Activated CD4-positive, alpha-beta T cell treated with anti-CD3 and anti-CD28 coated beads for 36 hours (primary cell): ENCODE measurements at regions of chr1 and their contacts with region 1.

Region 1: DNA sequence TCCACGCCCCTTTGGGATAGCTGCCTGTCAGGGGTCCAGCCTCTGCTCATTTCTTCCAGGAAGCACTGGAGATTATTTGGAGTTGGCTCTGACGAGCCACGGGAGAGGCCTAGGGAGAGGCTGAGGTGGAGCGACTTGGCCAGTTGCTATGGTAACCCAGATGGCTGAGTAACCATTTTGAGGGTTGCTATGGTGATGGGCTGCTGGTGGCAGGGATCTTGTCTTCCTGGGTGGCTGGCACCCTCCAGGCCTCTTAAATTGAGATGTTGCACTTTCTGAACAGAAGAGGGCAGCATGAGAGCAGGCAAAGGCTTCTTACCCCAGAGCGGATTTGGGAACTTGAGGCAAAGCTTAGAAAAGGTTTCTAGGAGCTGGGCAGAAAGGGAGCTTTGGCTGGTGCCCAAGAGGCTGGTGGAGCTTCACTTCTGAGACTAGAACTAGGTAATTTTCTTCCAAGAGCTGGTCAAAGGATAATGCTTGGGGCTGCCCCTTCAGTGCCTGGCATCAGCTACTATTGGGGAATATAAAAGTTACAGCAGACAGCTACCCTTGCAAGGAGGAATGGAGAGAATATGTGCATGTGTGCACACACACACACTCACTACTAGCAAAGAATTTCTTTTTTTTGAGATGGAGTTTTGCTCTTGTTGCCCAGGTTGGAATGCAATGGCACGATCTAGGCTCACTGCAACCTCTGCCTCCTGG is 72.5 kb downstream of the NDUFS5 start:
- DNase-seq: peak; percentile 77
- ATAC-seq: peak; percentile 88
- H3K4me3 Mint-ChIP-seq: no peak overlapping the region
- H3K27ac Mint-ChIP-seq: no peak overlapping the region
- H3K4me1 Mint-ChIP-seq: peaks cover 22% of the 10 kb centered on the region
- H3K27me3 Mint-ChIP-seq: peaks cover 2% of the 10 kb centered on the region

Region 2: DNA sequence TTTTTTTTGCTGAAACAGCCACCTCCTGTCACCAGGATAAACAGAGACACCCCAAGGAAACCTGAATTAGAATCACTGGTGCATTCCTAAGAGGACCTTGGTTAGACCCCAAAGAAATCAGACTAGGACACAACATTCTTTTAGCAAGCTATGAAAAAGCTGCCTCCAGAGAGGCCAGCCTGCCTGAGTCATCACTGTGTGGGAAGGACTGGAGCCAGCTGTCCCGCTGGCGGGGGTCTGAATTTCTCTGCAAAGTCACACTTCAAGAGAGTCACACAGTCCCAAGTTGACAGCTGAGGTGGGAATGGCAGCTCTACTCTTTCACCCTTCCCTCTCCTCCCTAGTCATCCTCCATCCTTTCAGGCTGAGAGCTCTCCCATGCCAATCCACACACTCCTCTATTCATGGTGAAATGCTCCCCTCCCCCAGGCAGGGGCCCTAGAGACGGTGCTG is 647.1 kb before region 1 on chr1:
- CTCF ChIA-PET with region 1: no interaction called
- POLR2A ChIA-PET with region 1: no interaction called
- intact Hi-C with region 1: no loop called
- DNase-seq: no peak
- ATAC-seq: no peak
- H3K4me3 Mint-ChIP-seq: no peak overlapping the region
- H3K27ac Mint-ChIP-seq: no peak overlapping the region
- H3K4me1 Mint-ChIP-seq: no peaks in the 10 kb centered on the region
- H3K27me3 Mint-ChIP-seq: peaks cover 4% of the 10 kb centered on the region

Region 3: DNA sequence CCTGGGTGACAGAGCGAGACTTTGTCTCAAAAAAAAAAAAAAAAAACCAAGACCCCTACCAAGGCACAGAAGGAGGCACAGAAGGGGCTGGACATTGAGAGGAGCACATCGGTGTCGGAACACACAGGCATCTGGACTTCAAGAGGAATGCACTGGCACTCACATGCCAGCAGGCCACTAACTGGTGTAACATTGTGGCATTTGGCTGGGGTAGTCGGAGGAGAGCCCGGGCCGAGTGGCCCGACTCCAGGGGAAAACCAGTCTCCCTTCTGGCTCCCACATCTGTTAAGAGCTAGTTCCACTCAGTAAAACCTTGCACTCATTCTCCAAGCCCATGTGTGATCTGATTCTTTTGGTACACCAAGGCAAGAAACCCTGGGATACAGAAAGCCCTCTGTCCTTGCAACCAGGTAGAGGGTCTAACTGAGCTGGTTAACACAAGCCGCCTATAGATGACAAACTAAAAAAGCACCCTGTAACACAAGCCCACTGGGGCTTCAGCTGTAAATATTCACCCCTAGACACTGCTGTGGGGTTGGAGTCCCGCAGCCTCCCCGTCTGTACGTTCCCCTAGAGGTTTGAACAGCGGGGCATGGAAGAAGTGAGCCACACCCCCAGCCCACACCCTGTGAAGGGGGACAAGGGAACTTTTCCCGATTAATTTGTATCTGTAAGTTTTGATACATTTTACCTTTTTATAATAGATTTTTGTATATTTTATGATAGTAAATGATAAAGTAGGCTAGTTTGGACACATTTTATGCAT is 124.9 kb before region 1 on chr1:
- CTCF ChIA-PET with region 1: no interaction called
- POLR2A ChIA-PET with region 1: no interaction called
- intact Hi-C with region 1: no loop called
- DNase-seq: no peak
- ATAC-seq: no peak
- H3K4me3 Mint-ChIP-seq: no peak overlapping the region
- H3K27ac Mint-ChIP-seq: no peak overlapping the region
- H3K4me1 Mint-ChIP-seq: peaks cover 6% of the 10 kb centered on the region
- H3K27me3 Mint-ChIP-seq: no peaks in the 10 kb centered on the region

Region 4: GRCh38 chr1:39061951-39062350 is 36.7 kb before region 1 on chr1:
- CTCF ChIA-PET with region 1: no interaction called
- POLR2A ChIA-PET with region 1: no interaction called
- intact Hi-C with region 1: no loop called
- DNase-seq: no peak
- ATAC-seq: no peak
- H3K4me3 Mint-ChIP-seq: no peak overlapping the region
- H3K27ac Mint-ChIP-seq: no peak overlapping the region
- H3K4me1 Mint-ChIP-seq: no peaks in the 10 kb centered on the region
- H3K27me3 Mint-ChIP-seq: no peaks in the 10 kb centered on the region

Region 5: GRCh38 chr1:39183503-39184353 is 85.0 kb after region 1 on chr1:
- CTCF ChIA-PET with region 1: interaction called, 6 read pairs
- POLR2A ChIA-PET with region 1: no interaction called
- intact Hi-C with region 1: loop called in 1 of 2 experiments (anchors 2 kb)
- DNase-seq: peak; percentile 90
- ATAC-seq: peak; percentile 84
- H3K4me3 Mint-ChIP-seq: peak overlapping the region; percentile 30
- H3K27ac Mint-ChIP-seq: peak overlapping the region; percentile 98
- H3K4me1 Mint-ChIP-seq: peaks cover 50% of the 10 kb centered on the region
- H3K27me3 Mint-ChIP-seq: no peaks in the 10 kb centered on the region

Region 6: DNA sequence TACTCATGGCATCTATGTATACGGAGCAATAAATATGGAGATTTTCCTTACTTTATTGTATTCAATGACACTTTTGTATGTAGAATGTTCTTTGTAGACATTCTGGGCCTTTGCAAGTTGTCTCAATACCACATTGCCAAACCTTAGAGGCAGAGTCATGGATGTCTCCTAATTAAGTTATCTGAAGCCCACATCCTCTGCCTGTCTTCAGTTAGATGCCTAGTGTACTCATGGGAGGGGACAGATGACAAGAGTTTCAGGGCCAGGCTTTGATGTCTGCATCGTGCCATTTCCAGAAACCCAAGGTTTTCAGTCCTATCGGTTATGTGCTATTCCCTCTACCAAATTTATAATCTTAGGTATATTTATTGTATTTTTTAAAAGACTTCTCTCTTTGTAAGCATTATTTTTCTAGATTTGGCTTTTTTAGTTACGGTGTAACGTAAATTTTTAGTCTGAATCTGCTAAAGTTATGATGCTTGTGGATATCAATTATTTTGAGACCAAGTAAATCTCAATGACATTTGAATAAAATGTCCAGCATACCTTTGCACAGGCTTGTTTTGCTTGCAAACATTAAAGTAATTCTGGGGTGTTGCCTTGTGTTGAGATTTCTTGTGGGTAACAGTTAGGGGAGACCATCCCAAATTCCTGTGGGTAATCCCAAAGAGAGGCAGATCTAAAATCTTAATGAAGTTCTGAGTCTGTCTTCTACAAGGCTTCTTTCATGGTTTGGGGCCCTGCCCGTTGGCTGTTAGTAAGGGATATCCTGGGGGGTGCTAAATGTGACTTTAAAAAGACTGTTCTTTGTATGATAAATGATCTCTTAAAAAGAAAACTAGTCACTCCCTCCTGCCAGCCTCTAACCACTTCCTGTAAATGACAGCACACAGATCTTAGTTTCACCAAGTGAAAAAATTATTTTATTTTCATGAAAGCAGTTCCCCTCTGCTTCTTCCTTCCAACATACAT is 97.8 kb after region 1 on chr1:
- CTCF ChIA-PET with region 1: interaction called, 31 read pairs
- POLR2A ChIA-PET with region 1: interaction called, 3 read pairs
- intact Hi-C with region 1: loop called (anchors 1 to 2 kb)
- DNase-seq: peak; percentile 78
- ATAC-seq: peak; percentile 42
- H3K4me3 Mint-ChIP-seq: peak overlapping the region; percentile 54
- H3K27ac Mint-ChIP-seq: peak overlapping the region; percentile 87
- H3K4me1 Mint-ChIP-seq: peaks cover 84% of the 10 kb centered on the region
- H3K27me3 Mint-ChIP-seq: no peaks in the 10 kb centered on the region

Region 7: DNA sequence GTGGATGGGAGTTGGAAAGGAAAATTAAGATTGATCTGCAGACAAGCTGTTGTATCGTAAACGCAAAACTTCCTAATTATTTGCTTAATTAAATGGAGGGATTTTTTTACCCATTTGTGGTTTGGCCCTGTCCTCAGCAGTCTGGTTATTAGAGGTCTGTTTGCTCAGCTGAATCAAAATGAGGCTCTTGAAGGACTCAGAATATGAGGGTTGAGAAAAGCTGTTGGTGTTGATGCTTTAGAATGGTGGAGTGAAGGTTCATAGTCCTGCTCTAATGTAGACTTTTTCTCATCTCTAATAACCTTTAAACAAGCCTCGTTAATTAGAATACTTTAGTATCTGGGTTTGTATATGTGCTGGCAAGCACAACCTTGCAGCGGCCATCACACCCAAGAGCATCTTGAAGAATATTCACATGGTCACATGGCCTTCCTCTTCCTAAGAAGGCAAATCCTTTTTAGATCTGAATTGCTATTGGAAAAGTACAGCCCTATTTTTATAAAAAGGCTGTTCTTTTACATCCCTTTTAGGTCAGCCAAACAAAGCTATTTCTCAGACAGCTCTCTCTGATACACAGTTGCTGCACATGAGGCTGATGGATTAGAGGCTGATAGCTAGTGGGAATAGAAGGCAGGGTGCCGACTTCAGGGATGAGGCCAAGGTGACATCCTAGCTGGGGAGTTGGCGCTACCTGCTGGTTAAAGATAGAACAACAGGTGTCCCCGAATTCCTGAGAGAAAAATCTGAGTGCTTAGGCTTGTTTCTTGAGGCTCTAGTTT is 159.6 kb after region 1 on chr1:
- CTCF ChIA-PET with region 1: interaction called, 37 read pairs
- POLR2A ChIA-PET with region 1: no interaction called
- intact Hi-C with region 1: loop called (anchors 1 to 2 kb)
- DNase-seq: peak; percentile 75
- ATAC-seq: peak; percentile 74
- H3K4me3 Mint-ChIP-seq: no peak overlapping the region
- H3K27ac Mint-ChIP-seq: peak overlapping the region; percentile 51
- H3K4me1 Mint-ChIP-seq: peaks cover 37% of the 10 kb centered on the region
- H3K27me3 Mint-ChIP-seq: no peaks in the 10 kb centered on the region

Region 8: DNA sequence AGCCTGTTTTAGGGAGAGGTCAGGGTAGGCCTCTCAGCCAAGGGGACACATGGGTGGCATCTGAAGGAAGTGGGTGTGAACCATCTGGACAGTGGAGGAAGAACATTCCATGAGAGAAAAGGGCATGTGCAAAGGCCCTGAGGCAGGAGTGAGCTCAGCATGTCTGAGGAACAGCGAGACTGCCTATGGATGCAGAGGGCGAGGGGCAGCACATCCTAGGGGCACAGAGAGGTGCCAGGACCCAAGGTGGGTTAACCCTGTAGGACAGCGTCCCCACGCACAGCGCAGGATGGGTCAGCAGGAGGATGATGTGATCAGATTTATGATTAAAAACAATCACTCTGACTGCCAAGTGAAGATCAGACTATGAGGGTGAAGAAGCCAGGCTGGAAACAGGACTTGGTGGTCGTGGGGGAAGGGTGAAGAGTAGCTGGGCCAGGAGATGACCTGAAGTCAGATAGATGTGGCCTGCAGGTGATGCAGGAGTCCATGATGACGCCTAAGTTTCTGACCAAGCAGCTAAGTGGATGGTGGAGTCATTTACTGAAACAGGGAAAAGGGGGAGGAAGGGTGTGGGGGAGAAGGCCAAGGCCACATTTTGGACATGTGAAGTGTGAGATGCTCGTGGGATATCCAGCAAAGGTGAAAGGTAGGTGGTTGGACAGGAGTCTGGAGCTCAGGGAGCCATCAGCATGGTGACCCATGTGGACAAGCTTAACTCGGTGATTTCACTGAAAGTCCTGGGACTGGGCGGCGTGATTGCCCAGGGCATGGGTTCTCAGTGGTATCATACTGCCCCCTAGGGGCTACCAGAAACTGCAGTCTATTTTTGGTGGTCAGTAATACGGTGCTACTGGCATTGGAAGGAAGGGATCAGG is 440.1 kb after region 1 on chr1:
- CTCF ChIA-PET with region 1: interaction called, 15 read pairs
- POLR2A ChIA-PET with region 1: no interaction called
- intact Hi-C with region 1: loop called in 1 of 2 experiments (anchors 1 kb)
- DNase-seq: peak; percentile 67
- ATAC-seq: peak; percentile 91
- H3K4me3 Mint-ChIP-seq: no peak overlapping the region
- H3K27ac Mint-ChIP-seq: no peak overlapping the region
- H3K4me1 Mint-ChIP-seq: no peaks in the 10 kb centered on the region
- H3K27me3 Mint-ChIP-seq: no peaks in the 10 kb centered on the region

Region 9: DNA sequence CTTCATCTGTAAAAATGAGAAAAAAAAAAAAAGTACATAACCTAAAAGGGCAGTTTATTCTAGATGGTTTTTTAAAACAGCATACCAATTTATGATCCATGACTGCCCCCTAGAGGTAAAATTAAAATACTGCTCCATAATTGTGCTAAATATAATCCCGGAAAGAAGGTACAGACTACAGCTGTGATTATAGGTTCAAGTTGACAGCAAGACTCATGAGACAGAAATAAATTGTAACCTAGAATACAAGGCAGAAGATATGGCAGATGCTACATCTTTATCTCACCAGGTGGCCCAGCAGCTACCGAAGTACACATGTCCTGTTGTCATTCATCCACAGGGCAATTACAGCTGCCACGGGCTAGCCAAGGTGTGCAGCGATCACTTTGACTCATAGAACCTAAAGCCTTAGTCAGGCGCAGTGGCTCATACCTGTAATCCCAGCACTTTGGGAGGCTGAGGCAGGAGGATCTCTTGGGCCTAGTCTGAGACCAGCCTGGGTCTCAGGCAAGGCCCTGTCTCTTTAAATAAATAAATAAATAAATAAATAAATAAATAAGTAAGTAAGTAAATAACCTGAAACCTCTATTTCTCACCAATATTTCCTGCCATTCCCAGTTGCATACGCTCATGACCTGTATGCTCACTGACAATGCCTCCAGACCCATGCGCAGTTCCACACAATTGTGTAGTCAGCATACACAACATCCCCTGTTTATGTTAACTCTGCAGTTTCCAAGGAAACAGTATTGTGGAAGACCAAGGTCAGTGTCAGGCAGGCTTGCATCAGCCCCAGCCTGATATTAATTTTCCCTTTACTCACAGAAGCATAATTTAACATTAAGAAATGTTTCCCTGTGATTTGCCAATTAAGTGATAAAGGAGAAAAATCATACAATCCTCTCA is 621.6 kb after region 1 on chr1:
- CTCF ChIA-PET with region 1: no interaction called
- POLR2A ChIA-PET with region 1: no interaction called
- intact Hi-C with region 1: loop called in 1 of 2 experiments (anchors 10 kb)
- DNase-seq: no peak
- ATAC-seq: peak; percentile 73
- H3K4me3 Mint-ChIP-seq: no peak overlapping the region
- H3K27ac Mint-ChIP-seq: no peak overlapping the region
- H3K4me1 Mint-ChIP-seq: no peaks in the 10 kb centered on the region
- H3K27me3 Mint-ChIP-seq: peaks cover 38% of the 10 kb centered on the region